IMR-90 (cell line): ENCODE measurements at regions of chr13 and their contacts with region 1.

Region 1: GRCh38 chr13:23344931-23345595 is 88.4 kb downstream of the SACS start:
- DNase-seq: no peak
- ATAC-seq: peak; percentile 63
- H3K4me3 ChIP-seq: no peak overlapping the region
- H3K27ac ChIP-seq: peak overlapping the region; percentile 63; the same call in 1 of the 2 replicates
- H3K4me1 ChIP-seq: peaks cover 14% of the 10 kb centered on the region
- H3K27me3 ChIP-seq: no peaks in the 10 kb centered on the region
- CTCF ChIP-seq: no peak
- POLR2A ChIP-seq: no peak
- RAD21 ChIP-seq: no peak

Region 2: DNA sequence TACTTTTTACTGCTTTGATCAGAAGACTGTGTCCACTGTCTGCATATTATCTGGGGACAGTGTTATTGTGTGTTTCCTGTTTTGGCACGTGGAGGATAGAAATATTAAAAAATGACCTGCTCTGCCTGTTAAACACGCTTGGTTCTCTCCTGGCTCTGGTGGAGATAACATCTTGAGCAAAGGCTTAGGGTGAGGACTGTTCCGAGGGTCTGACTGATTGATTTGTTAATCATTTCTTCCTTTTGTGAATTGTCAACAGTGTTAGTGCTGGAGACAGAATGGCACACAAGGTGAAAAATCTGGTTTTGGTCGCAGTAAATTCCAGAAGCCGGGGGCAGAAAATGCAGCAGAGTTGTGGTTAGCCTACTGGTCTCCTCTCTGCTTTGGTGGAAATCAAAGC is 1510.6 kb before region 1 on chr13:
- CTCF ChIA-PET with region 1: no interaction called
- POLR2A ChIA-PET with region 1: interaction called, 26 read pairs
- dilution Hi-C with region 1: no loop called
- in situ Hi-C with region 1: no loop called
- intact Hi-C with region 1: no loop called
- DNase-seq: no peak
- ATAC-seq: no peak
- H3K4me3 ChIP-seq: no peak overlapping the region
- H3K27ac ChIP-seq: no peak overlapping the region
- H3K4me1 ChIP-seq: peaks cover 1% of the 10 kb centered on the region; the same call in 1 of the 2 replicates
- H3K27me3 ChIP-seq: no peaks in the 10 kb centered on the region
- CTCF ChIP-seq: no peak
- POLR2A ChIP-seq: no peak
- RAD21 ChIP-seq: no peak